Left ventricle myocardium superior (tissue), 1 donor: ENCODE measurements at regions of chr14 and their contacts with region 1.

Region 1: DNA sequence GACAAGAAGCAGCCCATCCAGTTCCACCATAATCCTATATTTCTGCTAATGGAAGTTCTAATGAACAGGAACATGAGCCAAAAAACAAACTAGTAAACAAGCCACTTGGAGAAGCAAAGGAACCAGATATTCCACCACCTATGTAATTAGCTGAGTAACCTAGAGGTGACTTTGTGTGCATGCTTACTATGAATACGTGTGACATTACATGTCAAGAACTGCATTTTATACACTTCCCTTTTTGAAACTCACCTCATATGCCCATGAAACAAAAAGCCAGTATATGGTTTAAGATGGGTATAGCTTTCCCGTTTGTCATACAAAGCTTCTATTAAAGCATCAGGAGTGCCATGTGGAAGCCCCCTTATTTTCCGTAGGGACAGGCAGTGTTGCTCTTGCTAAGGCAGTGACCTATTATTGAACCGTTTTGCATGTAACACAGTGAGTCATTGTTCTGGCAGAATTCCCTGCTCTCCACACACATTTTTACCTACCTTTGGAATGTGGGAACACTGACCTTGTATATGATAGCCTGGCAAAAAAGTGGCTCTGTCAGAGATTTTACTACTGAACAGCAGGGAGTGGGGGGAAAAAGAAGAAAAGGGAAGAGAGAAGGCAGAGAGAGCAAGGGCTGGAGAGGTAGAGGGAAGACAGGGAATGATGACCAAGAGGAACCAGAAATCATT is 34.8 kb upstream of the FRMD6 start:
- DNase-seq: no peak
- ATAC-seq: peak; percentile 78

Region 2: GRCh38 chr14:51491776-51492175 is 125.1 kb before region 1 on chr14:
- intact Hi-C with region 1: loop called (anchors 1 kb)
- DNase-seq: no peak
- ATAC-seq: peak; percentile 19

Region 3: DNA sequence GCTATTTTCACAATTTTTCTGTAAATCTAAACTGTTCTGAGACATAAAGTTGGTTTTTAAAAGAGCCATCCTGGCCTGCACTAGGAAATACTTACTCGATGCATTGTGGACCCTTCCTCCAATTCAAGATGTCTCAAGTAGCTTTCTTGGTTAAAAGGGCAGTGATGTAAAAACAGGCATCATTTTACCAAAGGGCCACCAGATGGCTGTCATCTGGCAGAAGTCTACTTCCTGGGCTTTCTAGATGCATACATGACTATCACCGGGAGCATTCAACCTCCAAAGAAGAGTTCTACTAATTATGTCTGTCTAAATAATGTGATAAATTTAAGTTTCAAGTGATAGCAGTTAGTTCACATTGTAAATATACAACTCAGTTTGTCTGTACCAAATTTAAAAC is 61.9 kb before region 1 on chr14:
- intact Hi-C with region 1: no loop called
- DNase-seq: no peak
- ATAC-seq: no peak

Region 4: DNA sequence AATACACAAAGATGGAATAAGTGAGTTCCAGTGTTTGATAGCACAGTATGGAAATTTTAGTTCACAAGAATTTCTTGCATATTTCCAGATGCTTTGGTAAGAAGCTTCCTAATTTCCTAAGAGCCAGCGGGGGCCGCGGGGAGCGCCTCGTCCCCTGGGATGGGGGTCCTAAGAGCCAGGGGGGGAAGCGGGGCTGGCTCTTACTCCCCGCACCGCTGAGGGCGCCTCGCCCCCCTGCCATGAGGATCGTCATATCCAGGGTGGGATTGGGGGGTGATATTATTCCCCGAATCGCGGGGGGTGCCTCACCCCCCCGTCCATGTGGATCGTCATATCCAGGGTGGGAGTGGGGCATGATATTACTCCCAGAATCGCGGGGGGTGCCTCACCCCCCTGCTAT is 143.1 kb after region 1 on chr14:
- intact Hi-C with region 1: no loop called
- DNase-seq: no peak
- ATAC-seq: no peak